PC-3 (cell line): ENCODE measurements at regions of chr6 and their contacts with region 1.

Region 1: DNA sequence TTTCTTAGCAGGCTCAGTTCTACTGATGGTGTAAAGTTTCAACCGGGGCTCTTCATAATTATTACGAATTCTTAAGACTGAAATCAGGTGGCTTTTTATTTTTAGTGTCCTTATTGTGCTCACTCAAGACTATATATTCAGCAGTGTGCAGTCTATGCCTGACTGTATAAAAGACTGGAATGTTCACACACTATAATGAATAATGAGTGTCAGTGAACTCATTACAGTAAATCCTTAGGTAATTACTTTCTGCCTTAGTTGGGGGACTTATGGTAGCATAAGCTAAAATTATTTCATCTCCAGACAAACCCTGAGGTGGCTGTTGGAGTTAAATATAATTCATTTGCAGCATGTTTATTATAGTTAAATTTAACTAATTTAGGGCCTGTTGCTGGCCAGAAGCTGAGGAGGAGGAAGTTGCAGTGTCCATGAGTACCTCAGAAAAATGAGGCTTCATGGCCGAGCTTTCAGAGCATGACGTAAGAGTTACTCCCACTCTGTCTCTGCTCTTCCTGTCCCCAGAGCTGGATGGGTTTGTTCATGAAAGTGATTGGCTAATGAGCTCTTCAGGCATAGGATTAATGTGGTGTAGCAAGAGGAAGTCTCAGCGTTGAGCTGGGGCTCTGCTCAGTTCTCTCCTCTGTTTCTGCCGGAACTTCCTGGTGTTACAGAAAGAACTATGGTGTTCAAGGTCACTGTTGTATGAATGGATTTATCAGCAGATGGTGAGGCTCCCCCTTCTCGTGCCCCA is 335.7 kb downstream of the NRN1 start:
- DNase-seq: no peak
- ATAC-seq: no peak
- H3K4me3 ChIP-seq: no peak overlapping the region
- H3K27ac ChIP-seq: no peak overlapping the region
- H3K4me1 ChIP-seq: peaks cover 22% of the 10 kb centered on the region
- H3K27me3 ChIP-seq: no peaks in the 10 kb centered on the region
- CTCF ChIP-seq: no peak

Region 2: DNA sequence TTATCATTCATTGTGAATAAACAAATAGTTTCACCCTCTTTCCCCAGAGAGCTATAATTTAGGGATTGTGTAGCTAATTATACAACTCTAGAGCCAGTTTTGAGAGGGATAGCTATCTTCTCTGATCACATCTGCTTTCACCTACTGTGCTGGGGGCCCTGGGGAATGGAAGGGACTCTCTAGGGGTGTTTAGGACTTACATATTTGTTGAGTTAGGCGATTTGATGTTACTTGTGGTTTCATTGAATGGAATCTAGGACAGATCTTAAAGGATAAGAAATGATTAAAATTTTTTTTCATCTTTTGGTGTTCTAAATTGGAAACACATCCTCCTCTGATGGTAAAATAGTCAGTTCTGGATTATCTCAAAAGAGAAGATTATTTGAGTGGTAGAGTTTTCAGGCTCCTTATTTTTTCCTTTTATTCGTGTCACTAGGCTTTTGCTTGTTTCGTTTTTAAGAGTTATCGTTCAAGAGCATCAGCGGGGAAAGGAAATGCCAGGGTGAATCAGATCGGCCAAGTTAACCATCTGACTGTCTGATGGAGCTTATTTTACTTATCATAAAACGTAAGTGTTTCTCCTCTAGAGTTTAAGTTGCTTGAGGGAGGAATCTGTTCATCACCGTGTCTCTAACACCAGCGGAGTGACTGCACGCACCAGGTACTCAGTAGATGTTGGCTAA is 172.9 kb before region 1 on chr6:
- CTCF ChIA-PET with region 1: no interaction called
- POLR2A ChIA-PET with region 1: no interaction called
- intact Hi-C with region 1: loop called (anchors 10 kb)
- DNase-seq: peak; percentile 80
- ATAC-seq: peak; percentile 67
- H3K4me3 ChIP-seq: peak overlapping the region; percentile 64
- H3K27ac ChIP-seq: peak overlapping the region; percentile 83
- H3K4me1 ChIP-seq: peaks cover 26% of the 10 kb centered on the region
- H3K27me3 ChIP-seq: no peaks in the 10 kb centered on the region
- CTCF ChIP-seq: no peak

Region 3: GRCh38 chr6:5537967-5538366 is 133.0 kb before region 1 on chr6:
- CTCF ChIA-PET with region 1: no interaction called
- POLR2A ChIA-PET with region 1: no interaction called
- intact Hi-C with region 1: loop called (anchors 10 kb)
- DNase-seq: peak; percentile 78
- ATAC-seq: peak; percentile 89
- H3K4me3 ChIP-seq: no peak overlapping the region; the same call in 1 of the 2 replicates
- H3K27ac ChIP-seq: peak overlapping the region; percentile 64
- H3K4me1 ChIP-seq: peaks cover 40% of the 10 kb centered on the region
- H3K27me3 ChIP-seq: no peaks in the 10 kb centered on the region
- CTCF ChIP-seq: no peak